ENCODE measurements at regions of chr9 and their contacts with region 1.

Region 1: DNA sequence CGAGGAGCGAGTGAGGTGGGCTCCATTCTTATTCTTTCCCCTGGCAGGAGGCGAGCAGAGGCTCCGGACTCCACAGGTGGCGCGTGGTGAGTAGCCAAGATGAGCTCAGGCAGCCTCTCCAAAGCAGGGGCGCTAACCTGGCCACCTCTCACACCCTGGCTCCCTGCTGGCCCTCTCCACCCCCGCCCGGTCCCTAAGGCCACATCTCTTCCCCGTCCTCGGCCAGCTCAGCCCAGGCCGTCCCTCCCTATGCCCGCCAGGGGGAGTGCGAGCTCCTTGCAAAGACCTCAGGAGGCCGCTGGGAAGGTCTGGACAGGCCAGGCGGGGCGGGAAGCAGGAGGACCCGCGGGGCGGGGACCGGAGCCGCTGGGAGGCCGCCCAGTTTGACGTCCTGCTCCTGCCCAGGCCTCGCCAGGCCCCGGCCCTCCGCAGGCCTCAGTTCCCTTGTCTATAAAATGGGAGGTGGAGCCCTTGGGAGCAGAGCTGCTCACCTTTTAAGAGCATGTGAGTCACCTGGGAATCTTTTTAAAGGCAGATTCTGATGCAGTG is 46.3 kb upstream of the GGTA1 start:
- DNase-seq: peak; percentile 52
- ATAC-seq: peak; percentile 98
- H3K4me3 ChIP-seq: peak overlapping the region in 1 of 2 experiments; percentile 30; a peak in 1 of 4 replicates
- H3K27ac ChIP-seq: no peak overlapping the region
- H3K4me1 ChIP-seq: no peaks in the 10 kb centered on the region
- H3K27me3 ChIP-seq: no peaks in the 10 kb centered on the region
- CTCF ChIP-seq: peak; percentile 93

Region 2: DNA sequence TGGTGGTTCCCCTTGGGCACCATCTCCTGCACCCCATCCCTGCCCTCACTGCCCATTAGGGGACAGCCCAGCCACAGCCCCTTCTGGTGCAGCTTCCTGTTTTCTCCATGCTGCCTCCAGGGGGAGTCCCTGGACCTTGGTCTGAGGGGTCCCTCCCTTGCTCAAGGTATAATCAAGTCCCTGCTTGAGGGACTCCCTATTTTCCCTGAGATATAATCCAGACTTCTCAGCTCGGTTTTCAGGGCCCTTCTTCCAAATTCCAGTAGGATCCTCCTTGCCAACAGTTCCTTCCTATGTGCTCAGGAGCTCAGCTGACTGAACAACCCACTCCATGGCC is 75.1 kb after region 1 on chr9:
- CTCF ChIA-PET with region 1: no interaction called
- POLR2A ChIA-PET with region 1: no interaction called
- in situ Hi-C with region 1: no loop called
- intact Hi-C with region 1: loop called (anchors 10 kb)
- DNase-seq: no peak
- ATAC-seq: peak; percentile 62; the same call in 1 of the 2 replicates
- H3K4me3 ChIP-seq: no peak overlapping the region
- H3K27ac ChIP-seq: no peak overlapping the region
- H3K4me1 ChIP-seq: no peaks in the 10 kb centered on the region
- H3K27me3 ChIP-seq: no peaks in the 10 kb centered on the region
- CTCF ChIP-seq: no peak; the same call in 1 of the 2 replicates

Region 3: GRCh38 chr9:121650217-121651007 is 104.5 kb after region 1 on chr9:
- CTCF ChIA-PET with region 1: interaction called, 13 read pairs
- POLR2A ChIA-PET with region 1: no interaction called
- in situ Hi-C with region 1: no loop called
- intact Hi-C with region 1: no loop called
- DNase-seq: no peak
- ATAC-seq: peak; percentile 18; the same call in 1 of the 2 replicates
- H3K4me3 ChIP-seq: peak overlapping the region in 1 of 2 experiments; percentile 37; a peak in 2 of 4 replicates
- H3K27ac ChIP-seq: no peak overlapping the region
- H3K4me1 ChIP-seq: peaks cover 4% of the 10 kb centered on the region
- H3K27me3 ChIP-seq: peaks cover 2% of the 10 kb centered on the region
- CTCF ChIP-seq: no peak

Region 4: DNA sequence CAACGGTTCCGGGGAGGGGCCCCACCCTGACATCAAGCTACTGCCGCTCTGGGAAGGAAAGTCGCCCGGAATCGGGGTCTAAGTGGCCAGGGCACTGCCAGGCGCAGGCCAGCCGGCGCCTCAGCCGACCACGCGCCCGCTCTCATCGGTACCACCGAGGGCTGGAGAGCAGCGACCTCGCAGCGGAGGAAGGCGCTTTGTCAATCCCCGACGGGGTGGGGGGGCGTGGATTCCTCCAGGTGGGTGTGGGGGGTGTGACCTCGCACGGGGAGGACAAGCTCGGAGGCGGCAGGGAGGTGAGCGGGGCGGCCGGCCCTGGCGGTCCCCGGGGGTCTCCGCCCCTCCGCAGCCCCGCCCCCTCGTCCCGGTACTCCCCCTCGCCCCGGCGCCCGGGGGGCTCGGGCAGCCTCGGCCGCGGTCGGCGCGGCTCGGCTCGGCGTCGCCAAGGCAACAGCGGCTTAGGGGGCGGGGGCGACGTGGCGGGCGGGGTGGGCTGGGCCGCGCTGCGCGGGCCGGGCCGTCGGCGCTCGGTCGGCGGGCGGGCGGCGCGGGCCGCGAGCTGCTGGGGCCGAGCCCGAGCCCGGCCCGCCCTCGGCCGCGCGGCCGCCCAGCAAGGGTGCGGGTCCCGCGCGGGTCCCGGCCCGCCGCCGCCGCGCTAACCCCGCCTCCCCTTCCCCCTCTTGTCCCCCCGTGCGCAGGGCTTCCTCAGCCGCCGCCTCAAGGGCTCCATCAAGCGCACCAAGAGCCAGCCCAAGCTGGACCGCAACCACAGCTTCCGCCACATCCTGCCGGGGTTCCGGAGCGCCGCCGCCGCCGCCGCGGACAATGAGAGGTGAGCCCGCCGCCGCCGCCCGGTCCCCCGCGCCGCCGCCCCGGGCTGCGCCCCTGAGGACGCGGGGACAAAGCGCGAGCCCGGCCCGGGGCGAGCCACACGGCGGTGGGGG is 152.9 kb after region 1 on chr9:
- CTCF ChIA-PET with region 1: no interaction called
- POLR2A ChIA-PET with region 1: no interaction called
- in situ Hi-C with region 1: no loop called
- intact Hi-C with region 1: loop called (anchors 1 kb)
- DNase-seq: no peak
- ATAC-seq: peak; percentile 80
- H3K4me3 ChIP-seq: peak overlapping the region; percentile 42 to 51
- H3K27ac ChIP-seq: no peak overlapping the region
- H3K4me1 ChIP-seq: no peaks in the 10 kb centered on the region; the same call in none of the 2 replicates
- H3K27me3 ChIP-seq: no peaks in the 10 kb centered on the region
- CTCF ChIP-seq: no peak

Region 5: GRCh38 chr9:121852651-121853616 is 307.0 kb after region 1 on chr9:
- CTCF ChIA-PET with region 1: no interaction called
- POLR2A ChIA-PET with region 1: no interaction called
- in situ Hi-C with region 1: no loop called
- intact Hi-C with region 1: no loop called
- DNase-seq: no peak
- ATAC-seq: no peak
- H3K4me3 ChIP-seq: no peak overlapping the region
- H3K27ac ChIP-seq: no peak overlapping the region
- H3K4me1 ChIP-seq: no peaks in the 10 kb centered on the region
- H3K27me3 ChIP-seq: no peaks in the 10 kb centered on the region
- CTCF ChIP-seq: no peak

Measured in Panc1 (cell line).